ENCODE measurements at regions of chr1 and their contacts with region 1.

Region 1: DNA sequence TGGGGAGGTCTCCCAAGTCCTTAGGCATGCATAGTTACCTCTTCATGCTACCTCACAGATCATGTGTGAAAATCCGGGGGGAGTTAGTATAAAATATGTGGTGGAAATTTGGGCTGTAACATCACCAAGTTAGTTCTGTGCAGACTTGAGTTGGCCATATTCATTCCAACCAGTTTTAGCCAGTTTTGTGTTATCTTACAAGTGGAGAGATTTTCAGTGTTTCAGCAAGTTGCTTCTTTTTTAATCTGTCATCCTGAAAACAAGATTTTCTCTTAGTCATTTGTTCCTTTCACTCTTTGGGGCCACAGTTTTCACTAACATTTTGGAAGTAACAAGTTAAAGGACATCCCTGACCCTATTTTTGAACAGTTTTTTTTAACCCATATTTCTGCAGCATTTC is 11.3 kb downstream of the SLC25A24 start:
- DNase-seq: no peak
- H3K4me3 Mint-ChIP-seq: no peak overlapping the region
- H3K27ac Mint-ChIP-seq: peak overlapping the region; percentile 9
- H3K4me1 Mint-ChIP-seq: peaks cover 10% of the 10 kb centered on the region
- H3K27me3 Mint-ChIP-seq: no peaks in the 10 kb centered on the region

Region 2: DNA sequence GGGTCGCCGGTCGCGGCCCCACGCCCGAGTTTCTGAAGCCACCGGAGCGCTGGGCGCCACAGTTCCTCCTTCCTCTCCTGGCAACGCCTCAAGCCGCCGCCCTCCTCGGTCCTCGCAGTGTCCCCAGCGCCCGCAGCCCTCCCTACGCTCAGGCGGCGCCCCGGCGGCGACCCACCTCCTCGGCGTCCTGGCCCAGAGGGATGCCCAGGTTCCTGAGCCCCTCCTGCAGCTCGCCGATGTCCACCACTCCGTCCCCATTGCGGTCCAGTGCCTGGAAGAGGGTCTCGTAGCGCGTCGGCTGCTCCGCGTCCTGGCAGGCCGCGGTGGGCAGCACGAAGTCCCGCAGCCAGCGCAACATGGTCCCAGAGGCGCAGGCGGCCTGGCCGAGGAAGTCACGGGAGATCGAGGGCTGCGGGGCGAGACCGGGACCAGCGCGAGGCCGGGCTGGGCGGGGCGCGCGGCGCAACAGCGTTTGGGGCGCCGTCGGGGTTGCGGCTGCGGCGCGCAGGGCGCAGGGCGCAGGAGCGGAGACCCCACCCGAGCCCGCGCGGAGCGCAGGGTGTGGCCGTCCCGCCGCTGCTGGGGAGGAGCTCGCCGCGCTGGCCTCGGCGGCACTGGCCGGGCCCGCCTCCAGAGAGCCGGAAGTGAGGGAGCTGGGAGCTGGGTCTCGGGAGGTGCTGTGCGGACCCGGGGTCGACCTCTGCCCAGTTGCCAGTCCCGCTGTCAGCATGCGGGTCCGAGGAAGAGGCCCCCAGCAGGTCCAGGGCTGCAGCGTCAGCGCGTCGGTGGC is 11.2 kb after region 1 on chr1 and contains the start of gene SLC25A24:
- intact Hi-C with region 1: loop called (anchors 1 kb)
- DNase-seq: peak; percentile 83
- H3K4me3 Mint-ChIP-seq: peak within 1 kb of the TSS; percentile 91
- H3K27ac Mint-ChIP-seq: peak within 1 kb of the TSS; percentile 78
- H3K4me1 Mint-ChIP-seq: peaks cover 38% of the 10 kb centered on the region
- H3K27me3 Mint-ChIP-seq: peaks cover 7% of the 10 kb centered on the region
- total RNA-seq, gene SLC25A24: 14.6 and 16.6 TPM in 2 replicates

Region 3: DNA sequence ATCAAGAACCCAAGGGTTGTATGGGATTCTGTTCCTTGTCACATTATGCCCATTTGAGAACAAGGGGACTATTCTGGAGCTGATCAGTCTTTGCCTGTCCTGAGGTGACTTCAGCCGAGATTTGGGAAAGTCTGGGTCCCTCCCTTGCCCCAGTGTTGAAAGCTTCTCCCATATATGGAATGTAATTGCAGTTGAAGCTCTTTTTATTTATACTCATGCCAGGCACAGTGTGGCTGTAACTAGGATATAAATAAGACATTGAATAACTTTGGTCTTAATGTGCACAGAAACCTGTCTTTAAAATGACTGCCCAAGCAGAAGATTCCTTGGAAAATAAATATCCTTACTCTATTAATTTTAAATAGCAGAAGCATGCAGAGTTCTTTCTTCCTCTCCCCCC is 652.9 kb after region 1 on chr1:
- intact Hi-C with region 1: no loop called
- DNase-seq: no peak
- H3K4me3 Mint-ChIP-seq: no peak overlapping the region
- H3K27ac Mint-ChIP-seq: no peak overlapping the region
- H3K4me1 Mint-ChIP-seq: no peaks in the 10 kb centered on the region
- H3K27me3 Mint-ChIP-seq: peaks cover 31% of the 10 kb centered on the region

Measured in activated T-helper 1 cell treated with anti-CD3 and anti-CD28 coated beads, Interleukin-12 subunit alpha, Interleukin-12 subunit beta, Interleukin-2, Interleukin-4 antibody, amounts not matched to agents 30 ng/mL and 10 ng/mL and 1 ng/mL, durations not matched to agents 14 hours and 24 hours and 36 hours (primary cell).